ENCODE measurements at regions of chr1 and their contacts with region 1.

Region 1: DNA sequence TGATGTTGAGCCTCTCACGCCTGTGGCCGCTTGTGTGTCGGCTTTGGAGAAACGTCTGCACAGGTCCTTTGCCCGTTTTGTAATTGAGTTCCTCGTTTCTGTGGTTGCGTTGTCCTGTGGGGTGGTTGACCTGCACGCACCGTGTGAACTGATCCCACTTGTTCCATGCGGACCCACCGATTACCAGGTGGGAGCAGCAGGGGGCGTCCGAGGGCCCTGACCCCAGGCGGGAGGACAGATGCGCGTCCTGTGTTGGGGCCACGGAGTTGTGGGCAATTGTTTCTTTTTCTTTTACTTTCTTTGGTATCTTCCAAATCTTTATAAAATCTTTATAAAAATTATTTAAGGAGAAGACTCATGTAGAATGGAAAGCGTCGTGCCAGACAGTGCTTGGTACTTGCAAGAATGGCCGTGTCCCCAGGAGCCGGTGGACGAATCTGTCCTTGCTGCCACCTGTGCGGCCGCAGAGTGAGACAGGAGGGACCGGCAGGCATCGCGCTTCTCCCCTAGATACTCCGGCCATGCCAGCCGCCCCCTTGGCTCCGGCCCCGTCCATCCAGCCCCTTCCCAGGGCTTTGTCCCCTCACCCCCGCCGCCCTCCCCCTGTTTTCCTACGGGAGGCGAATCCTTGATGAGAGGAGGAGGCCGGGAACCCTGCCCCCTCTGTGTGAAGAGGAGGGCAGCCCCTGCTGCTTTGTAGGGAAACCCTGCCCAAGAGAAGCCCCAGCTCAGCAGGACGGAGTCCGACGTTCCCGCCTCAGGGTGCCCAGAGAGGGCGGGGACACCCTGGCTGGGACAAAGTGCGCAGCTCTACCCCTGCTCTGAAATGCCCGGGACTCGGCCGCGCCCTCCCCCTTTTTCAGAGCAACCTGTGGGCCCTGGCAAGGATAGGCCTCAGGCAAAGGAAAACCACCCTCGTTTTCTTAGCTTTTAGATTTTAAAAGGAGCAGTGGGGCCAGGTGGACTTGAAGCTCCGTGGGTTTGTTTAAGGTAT is 41.7 kb downstream of the PRKCZ start:
- DNase-seq: peak in 7 of 9 donors; percentile 11 to 50 (median 29)
- ATAC-seq: peak; percentile 72
- H3K4me3 ChIP-seq: no peak overlapping the region
- H3K4me3 Mint-ChIP-seq: peak overlapping the region in 1 of 10 donors; percentile 38
- H3K27ac ChIP-seq: no peak overlapping the region
- H3K27ac Mint-ChIP-seq: no peak overlapping the region
- H3K4me1 ChIP-seq: no peaks in the 10 kb centered on the region
- H3K4me1 Mint-ChIP-seq: peaks cover 0 to 10% (median 4%) of the 10 kb centered on the region in 7 donors
- H3K27me3 ChIP-seq: no peaks in the 10 kb centered on the region
- H3K27me3 Mint-ChIP-seq: no peaks in the 10 kb centered on the region

Region 2: DNA sequence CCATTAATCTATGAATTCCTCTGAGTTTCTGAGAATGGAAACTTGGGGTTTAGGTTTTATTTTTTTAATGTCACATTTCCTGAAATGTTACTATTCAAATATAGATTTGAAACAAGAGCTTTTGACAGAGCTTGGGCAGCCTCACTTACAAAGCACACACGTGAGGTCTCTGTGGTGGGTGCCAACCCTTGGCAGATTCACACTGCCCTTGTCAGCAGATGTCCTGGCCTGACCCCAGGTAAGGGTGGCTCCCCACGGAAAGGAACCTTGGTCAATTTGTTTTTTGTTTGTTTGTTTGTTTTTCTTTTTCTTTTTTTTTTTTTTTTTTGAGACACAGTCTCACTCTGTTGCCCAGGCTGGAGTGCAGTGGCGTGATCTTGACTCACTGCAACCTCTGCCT is 49.1 kb after region 1 on chr1:
- CTCF ChIA-PET with region 1: interaction called, 11 read pairs
- POLR2A ChIA-PET with region 1: no interaction called
- intact Hi-C with region 1: loop called in 1 of 2 experiments (anchors 1 kb)
- DNase-seq: no peak
- ATAC-seq: no peak
- H3K4me3 ChIP-seq: no peak overlapping the region
- H3K4me3 Mint-ChIP-seq: no peak overlapping the region
- H3K27ac ChIP-seq: no peak overlapping the region
- H3K27ac Mint-ChIP-seq: no peak overlapping the region
- H3K4me1 ChIP-seq: peaks cover 5 to 8% of the 10 kb centered on the region in 2 donors
- H3K4me1 Mint-ChIP-seq: peaks cover 7 to 21% (median 13%) of the 10 kb centered on the region in 7 donors
- H3K27me3 ChIP-seq: no peaks in the 10 kb centered on the region
- H3K27me3 Mint-ChIP-seq: no peaks in the 10 kb centered on the region

Region 3: GRCh38 chr1:2174348-2175054 is 82.6 kb after region 1 on chr1:
- CTCF ChIA-PET with region 1: interaction called, 5 read pairs
- POLR2A ChIA-PET with region 1: no interaction called
- intact Hi-C with region 1: loop called in 1 of 2 experiments (anchors 1 kb)
- DNase-seq: peak in 6 of 9 donors; percentile 21 to 46 (median 34)
- ATAC-seq: peak; percentile 73
- H3K4me3 ChIP-seq: no peak overlapping the region
- H3K4me3 Mint-ChIP-seq: peak overlapping the region in 6 of 10 donors; percentile 38 to 71 (median 56)
- H3K27ac ChIP-seq: no peak overlapping the region
- H3K27ac Mint-ChIP-seq: no peak overlapping the region
- H3K4me1 ChIP-seq: no peaks in the 10 kb centered on the region
- H3K4me1 Mint-ChIP-seq: peaks cover 0 to 8% (median 4%) of the 10 kb centered on the region in 7 donors
- H3K27me3 ChIP-seq: no peaks in the 10 kb centered on the region
- H3K27me3 Mint-ChIP-seq: no peaks in the 10 kb centered on the region

Region 4: GRCh38 chr1:2194898-2195673 is 103.2 kb after region 1 on chr1:
- CTCF ChIA-PET with region 1: no interaction called
- POLR2A ChIA-PET with region 1: no interaction called
- intact Hi-C with region 1: no loop called
- DNase-seq: peak; percentile 85 to 98 (median 95)
- ATAC-seq: peak; percentile 85
- H3K4me3 ChIP-seq: peak overlapping the region; percentile 89
- H3K4me3 Mint-ChIP-seq: peak overlapping the region; percentile 71 to 91 (median 86)
- H3K27ac ChIP-seq: peak overlapping the region; percentile 88
- H3K27ac Mint-ChIP-seq: peak overlapping the region; percentile 52 to 94 (median 92)
- H3K4me1 ChIP-seq: peaks cover 22 to 33% of the 10 kb centered on the region in 2 donors
- H3K4me1 Mint-ChIP-seq: peaks cover 15 to 34% (median 26%) of the 10 kb centered on the region in 7 donors
- H3K27me3 ChIP-seq: no peaks in the 10 kb centered on the region
- H3K27me3 Mint-ChIP-seq: no peaks in the 10 kb centered on the region